ENCODE measurements at regions of chr12 and their contacts with region 1.

Region 1: DNA sequence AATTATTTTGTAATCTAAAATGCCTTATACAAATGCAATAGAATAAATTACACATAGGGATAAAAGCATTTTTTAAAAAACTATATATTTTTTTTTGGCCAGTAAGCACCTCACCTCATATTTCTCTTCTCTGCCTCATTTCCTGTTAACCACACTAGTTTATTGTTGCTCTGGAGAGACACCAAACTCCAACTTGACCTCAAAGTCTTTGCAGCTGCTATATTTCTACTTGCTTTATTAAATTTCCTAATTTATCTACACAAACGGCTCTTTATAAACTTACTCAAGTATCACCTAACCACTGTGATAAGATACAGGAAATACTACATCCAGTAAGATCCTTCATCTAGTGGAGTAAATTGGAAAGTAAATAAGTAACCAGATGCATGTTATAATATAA is 622.3 kb downstream of the C12orf50 start:
- DNase-seq: no peak
- ATAC-seq: no peak
- H3K4me3 ChIP-seq: no peak overlapping the region
- H3K27ac ChIP-seq: no peak overlapping the region
- H3K4me1 ChIP-seq: no peaks in the 10 kb centered on the region
- H3K27me3 ChIP-seq: no peaks in the 10 kb centered on the region
- CTCF ChIP-seq: no peak

Region 2: DNA sequence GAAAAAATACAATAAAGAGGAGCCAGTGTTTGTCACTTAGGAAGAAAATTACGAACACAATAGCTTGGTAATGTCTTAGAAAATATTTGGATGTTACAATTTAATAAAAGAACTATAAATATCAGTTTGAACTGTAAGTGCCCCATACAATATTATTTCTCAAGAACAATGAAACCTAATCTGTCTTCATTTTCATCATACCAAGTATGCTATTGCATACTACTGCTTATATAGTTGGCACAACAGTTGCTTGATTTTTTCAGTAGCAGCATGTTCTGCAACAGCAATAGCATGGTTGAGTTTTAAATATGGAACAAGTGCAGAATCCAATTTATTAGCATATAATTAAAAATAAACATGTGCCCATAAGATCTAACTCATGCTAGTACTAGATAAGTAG is 57.6 kb after region 1 on chr12:
- CTCF ChIA-PET with region 1: no interaction called
- POLR2A ChIA-PET with region 1: interaction called, 12 read pairs
- intact Hi-C with region 1: no loop called
- DNase-seq: no peak
- ATAC-seq: no peak
- H3K4me3 ChIP-seq: no peak overlapping the region
- H3K27ac ChIP-seq: no peak overlapping the region
- H3K4me1 ChIP-seq: no peaks in the 10 kb centered on the region
- H3K27me3 ChIP-seq: no peaks in the 10 kb centered on the region
- CTCF ChIP-seq: no peak

Region 3: GRCh38 chr12:87728931-87729593 is 322.1 kb after region 1 on chr12:
- CTCF ChIA-PET with region 1: no interaction called
- POLR2A ChIA-PET with region 1: no interaction called
- intact Hi-C with region 1: no loop called
- DNase-seq: no peak
- ATAC-seq: no peak
- H3K4me3 ChIP-seq: no peak overlapping the region
- H3K27ac ChIP-seq: no peak overlapping the region
- H3K4me1 ChIP-seq: no peaks in the 10 kb centered on the region
- H3K27me3 ChIP-seq: no peaks in the 10 kb centered on the region
- CTCF ChIP-seq: no peak

Measured in PC-3 (cell line).